RWPE1 (cell line): ENCODE measurements at regions of chr5 and their contacts with region 1.

Region 1: GRCh38 chr5:91257301-91257700 is 125.8 kb downstream of the ARRDC3 start:
- DNase-seq: no peak
- H3K27ac ChIP-seq: no peak overlapping the region
- CTCF ChIP-seq: no peak

Region 2: GRCh38 chr5:91291628-91292569 is 34.6 kb after region 1 on chr5:
- CTCF ChIA-PET with region 1: no interaction called
- POLR2A ChIA-PET with region 1: interaction called, 10 read pairs
- DNase-seq: no peak
- H3K27ac ChIP-seq: no peak overlapping the region
- CTCF ChIP-seq: no peak

Region 3: DNA sequence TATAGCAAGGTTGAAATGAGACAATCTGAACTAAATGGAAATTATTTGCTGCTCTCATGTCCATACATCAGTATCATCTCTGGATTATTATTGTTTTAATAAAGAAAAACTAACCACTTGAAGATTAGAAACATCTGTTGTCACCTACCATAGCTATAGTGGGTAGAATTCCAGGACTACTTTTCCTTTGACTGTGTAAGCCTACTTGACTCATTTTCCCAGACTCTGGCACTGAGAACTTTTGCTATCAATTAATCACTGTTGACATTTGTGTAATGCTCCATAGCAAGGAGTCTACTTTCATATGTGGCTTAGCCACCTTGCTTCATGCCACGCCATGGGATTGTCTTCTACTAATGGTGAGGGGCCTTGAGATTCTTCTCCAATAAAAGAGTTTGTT is 185.7 kb after region 1 on chr5:
- CTCF ChIA-PET with region 1: no interaction called
- POLR2A ChIA-PET with region 1: no interaction called
- DNase-seq: no peak
- H3K27ac ChIP-seq: no peak overlapping the region
- CTCF ChIP-seq: no peak